PC-3 (cell line): ENCODE measurements at regions of chr5 and their contacts with region 1.

Region 1: GRCh38 chr5:146130440-146131045 is 25.2 kb upstream of the PLAC8L1 start:
- DNase-seq: peak; percentile 56
- ATAC-seq: no peak
- H3K4me3 ChIP-seq: no peak overlapping the region
- H3K27ac ChIP-seq: no peak overlapping the region
- H3K4me1 ChIP-seq: no peaks in the 10 kb centered on the region
- H3K27me3 ChIP-seq: no peaks in the 10 kb centered on the region
- CTCF ChIP-seq: peak; percentile 91

Region 2: DNA sequence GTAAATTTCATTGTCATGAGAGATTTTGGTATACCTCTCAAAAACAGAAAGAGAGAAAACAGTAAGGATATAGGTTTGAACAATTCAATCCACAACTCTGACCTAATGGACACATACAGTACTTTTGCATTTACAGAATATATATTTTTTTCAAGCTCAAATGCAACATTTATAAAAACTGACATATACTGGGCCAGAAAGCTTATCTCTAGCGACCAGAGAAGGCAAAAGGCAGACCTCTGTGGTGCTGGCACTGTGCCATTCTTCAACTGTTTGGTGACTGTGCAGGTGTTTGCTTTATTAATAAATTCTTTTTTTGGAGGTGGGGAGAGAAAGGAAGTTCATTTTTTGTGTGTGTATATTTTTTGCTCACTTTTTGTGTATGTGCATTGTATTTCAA is 19.1 kb before region 1 on chr5:
- CTCF ChIA-PET with region 1: interaction called, 10 read pairs
- POLR2A ChIA-PET with region 1: no interaction called
- intact Hi-C with region 1: no loop called
- DNase-seq: no peak
- ATAC-seq: no peak
- H3K4me3 ChIP-seq: no peak overlapping the region
- H3K27ac ChIP-seq: no peak overlapping the region
- H3K4me1 ChIP-seq: no peaks in the 10 kb centered on the region
- H3K27me3 ChIP-seq: no peaks in the 10 kb centered on the region
- CTCF ChIP-seq: no peak

Region 3: GRCh38 chr5:146165460-146165859 is 34.9 kb after region 1 on chr5:
- CTCF ChIA-PET with region 1: no interaction called
- POLR2A ChIA-PET with region 1: no interaction called
- intact Hi-C with region 1: loop called (anchors 5 kb)
- DNase-seq: no peak
- ATAC-seq: no peak
- H3K4me3 ChIP-seq: no peak overlapping the region
- H3K27ac ChIP-seq: no peak overlapping the region
- H3K4me1 ChIP-seq: no peaks in the 10 kb centered on the region
- H3K27me3 ChIP-seq: no peaks in the 10 kb centered on the region
- CTCF ChIP-seq: no peak